A549 (cell line): ENCODE measurements at regions of chr16 and their contacts with region 1.

Region 1: DNA sequence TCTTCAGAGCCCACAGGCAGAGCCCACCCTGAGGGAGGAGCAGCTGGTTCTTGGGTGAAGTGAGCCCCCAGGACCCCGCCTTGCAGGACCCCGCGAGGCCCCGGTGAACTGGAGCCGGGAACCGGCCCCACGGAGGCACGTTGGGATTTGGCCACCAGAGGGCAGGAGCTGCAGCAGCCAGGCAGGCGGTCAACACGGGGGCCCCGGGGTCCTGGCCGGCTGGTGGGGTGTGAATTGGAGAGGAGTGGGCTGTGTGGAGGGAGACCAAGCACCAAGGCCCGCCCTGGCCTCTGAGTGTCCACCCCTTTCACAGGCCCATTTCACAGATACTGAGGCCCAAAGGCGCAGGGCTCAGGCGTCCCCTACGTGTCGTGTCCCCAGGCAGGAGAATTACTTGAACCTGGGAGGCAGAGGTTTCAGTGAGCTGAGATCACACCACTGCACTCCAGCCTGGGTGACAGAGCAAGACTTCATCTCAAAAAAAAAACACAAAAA is 2.2 kb downstream of the DPEP1 start:
- DNase-seq: peak in 1 of 2 experiments; percentile 47
- ATAC-seq: peak; percentile 54 to 83; a peak in 3 of 6 replicates
- H3K4me3 ChIP-seq: no peak overlapping the region
- H3K27ac ChIP-seq: peak overlapping the region in 1 of 2 experiments; percentile 52; a peak in 3 of 6 replicates
- H3K4me1 ChIP-seq: peaks cover 23% of the 10 kb centered on the region
- CTCF ChIP-seq: peak; percentile 77
- EP300 ChIP-seq: no peak
- POLR2A ChIP-seq: no peak
- RAD21 ChIP-seq: peak; percentile 49 to 67

Region 2: DNA sequence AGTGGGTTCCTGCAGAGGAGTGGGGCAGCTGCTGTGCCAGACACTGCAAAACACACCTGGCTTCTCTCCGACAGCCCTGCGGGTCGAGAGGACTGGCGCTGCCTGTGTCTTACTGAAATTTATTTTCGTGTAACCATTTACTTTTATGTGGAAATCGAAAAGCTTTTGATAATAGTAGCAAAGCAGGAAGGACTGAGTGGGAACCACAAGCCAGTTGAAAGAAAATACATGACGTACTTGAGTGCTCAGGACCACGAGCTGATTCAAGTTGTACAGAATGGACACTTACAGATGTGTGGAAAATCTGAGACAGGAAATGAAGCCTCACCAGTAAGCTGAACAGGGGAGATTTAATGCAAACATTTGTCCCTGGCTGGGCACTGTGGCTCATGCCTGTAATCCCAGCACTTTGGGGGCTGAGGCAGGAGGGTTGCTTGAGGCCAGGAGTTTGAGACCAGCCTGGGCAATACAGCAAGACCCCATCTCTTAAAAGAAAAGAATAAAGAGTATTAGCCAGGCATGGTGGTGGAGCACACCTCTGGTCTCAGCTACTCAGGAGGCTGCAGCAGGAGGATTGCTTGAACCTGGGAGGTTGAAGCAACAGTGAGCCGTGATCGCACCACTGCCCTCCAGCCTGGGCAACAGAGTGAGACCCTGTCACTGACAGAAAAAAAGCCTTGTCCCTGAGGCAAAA is 66.5 kb before region 1 on chr16:
- CTCF ChIA-PET with region 1: no interaction called
- POLR2A ChIA-PET with region 1: no interaction called
- DNase-seq: no peak
- ATAC-seq: no peak
- H3K4me3 ChIP-seq: no peak overlapping the region
- H3K27ac ChIP-seq: no peak overlapping the region
- H3K4me1 ChIP-seq: no peaks in the 10 kb centered on the region
- CTCF ChIP-seq: no peak
- EP300 ChIP-seq: no peak
- POLR2A ChIP-seq: no peak
- RAD21 ChIP-seq: no peak

Region 3: DNA sequence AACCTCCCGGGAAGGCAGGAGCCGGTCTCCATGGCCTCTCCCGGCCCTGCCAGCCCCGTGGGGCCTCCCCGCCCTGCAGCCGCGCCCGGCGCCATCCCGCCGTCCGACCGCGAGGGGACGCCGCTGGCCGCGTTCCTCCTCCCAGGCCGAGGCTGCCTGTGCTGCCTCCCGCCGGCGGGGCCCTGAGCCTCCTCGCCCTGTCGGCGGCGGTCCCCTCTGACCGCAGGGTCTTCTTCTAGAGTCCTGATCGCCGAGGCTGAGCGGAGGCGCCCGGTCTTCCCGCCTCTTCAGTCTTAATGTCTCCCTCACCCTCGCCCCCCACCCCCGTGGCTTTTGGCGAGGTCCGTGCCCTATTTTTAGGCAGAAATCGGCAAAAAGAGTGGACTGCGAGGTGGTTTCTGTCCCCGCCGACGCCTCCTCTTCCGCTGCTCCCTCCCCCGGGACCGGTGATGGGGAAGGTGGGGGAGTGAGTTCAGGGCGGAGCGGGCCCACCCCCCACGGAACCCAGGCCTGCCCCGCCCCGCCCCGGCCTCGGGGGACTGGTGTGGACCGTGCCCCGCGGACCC is 40.9 kb before region 1 on chr16:
- CTCF ChIA-PET with region 1: interaction called, 12 read pairs
- POLR2A ChIA-PET with region 1: no interaction called
- DNase-seq: peak; percentile 84 to 92
- ATAC-seq: peak; percentile 69 to 90
- H3K4me3 ChIP-seq: peak overlapping the region; percentile 73
- H3K27ac ChIP-seq: peak overlapping the region; percentile 90 to 97
- H3K4me1 ChIP-seq: peaks cover 15% of the 10 kb centered on the region
- CTCF ChIP-seq: peak; percentile 90
- EP300 ChIP-seq: no peak
- POLR2A ChIP-seq: no peak
- RAD21 ChIP-seq: peak; percentile 79 to 91

Region 4: GRCh38 chr16:89602273-89602951 is 13.2 kb before region 1 on chr16:
- CTCF ChIA-PET with region 1: interaction called, 49 read pairs
- POLR2A ChIA-PET with region 1: no interaction called
- DNase-seq: peak; percentile 55 to 56
- ATAC-seq: peak; percentile 65 to 71
- H3K4me3 ChIP-seq: no peak overlapping the region
- H3K27ac ChIP-seq: peak overlapping the region; percentile 23 to 76; a peak in 4 of 6 replicates
- H3K4me1 ChIP-seq: peaks cover 30% of the 10 kb centered on the region
- CTCF ChIP-seq: no peak
- EP300 ChIP-seq: no peak
- POLR2A ChIP-seq: no peak
- RAD21 ChIP-seq: no peak

Region 5: DNA sequence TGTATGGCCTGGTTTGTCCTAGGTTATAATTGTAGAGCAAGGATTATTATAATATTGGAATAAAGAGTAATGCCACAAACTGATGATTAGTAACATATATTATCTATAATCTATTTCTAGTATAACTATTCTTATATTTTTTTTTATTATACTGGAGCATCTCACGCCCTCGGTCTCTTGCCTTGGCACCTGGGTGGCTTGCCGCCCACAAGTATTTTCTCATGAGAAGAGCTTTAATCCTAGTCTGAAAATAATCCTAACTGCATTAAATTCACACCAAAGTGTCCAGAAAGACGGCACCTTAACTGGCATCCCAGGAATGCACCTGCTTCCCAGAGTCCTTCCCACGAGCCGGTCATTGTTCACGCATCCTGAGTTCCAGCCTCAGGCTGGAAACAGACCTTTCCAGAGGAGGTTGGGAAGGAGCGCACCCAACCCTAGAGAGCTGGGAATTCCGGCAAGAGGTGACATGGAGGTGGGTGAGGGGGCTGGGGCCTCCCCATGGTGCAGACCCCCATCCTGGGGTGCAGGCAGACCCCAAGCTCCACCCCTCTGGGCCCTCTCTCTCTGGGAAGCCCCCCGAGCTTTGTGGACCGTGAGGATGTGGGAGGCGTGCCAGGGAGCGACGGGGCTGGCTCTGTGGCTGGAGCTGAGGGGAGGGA is 25.9 kb after region 1 on chr16:
- CTCF ChIA-PET with region 1: interaction called, 125 read pairs
- POLR2A ChIA-PET with region 1: no interaction called
- DNase-seq: no peak
- ATAC-seq: no peak
- H3K4me3 ChIP-seq: no peak overlapping the region
- H3K27ac ChIP-seq: no peak overlapping the region
- H3K4me1 ChIP-seq: 0 out of 3 replicates have a peak, but pooled peaks cover 3% of the 10 kb centered on the region
- CTCF ChIP-seq: no peak; the same call in 2 of the 3 replicates
- EP300 ChIP-seq: no peak
- POLR2A ChIP-seq: no peak
- RAD21 ChIP-seq: no peak; a peak in 1 of 5 replicates

Region 6: GRCh38 chr16:89658221-89658879 is 42.7 kb after region 1 on chr16:
- CTCF ChIA-PET with region 1: interaction called, 35 read pairs
- POLR2A ChIA-PET with region 1: no interaction called
- DNase-seq: no peak
- ATAC-seq: peak; percentile 42 to 53; a peak in 5 of 6 replicates
- H3K4me3 ChIP-seq: peak overlapping the region; percentile 94
- H3K27ac ChIP-seq: peak overlapping the region; percentile 88 to 93
- H3K4me1 ChIP-seq: peaks cover 16% of the 10 kb centered on the region
- CTCF ChIP-seq: no peak
- EP300 ChIP-seq: no peak
- POLR2A ChIP-seq: no peak
- RAD21 ChIP-seq: no peak

Region 7: DNA sequence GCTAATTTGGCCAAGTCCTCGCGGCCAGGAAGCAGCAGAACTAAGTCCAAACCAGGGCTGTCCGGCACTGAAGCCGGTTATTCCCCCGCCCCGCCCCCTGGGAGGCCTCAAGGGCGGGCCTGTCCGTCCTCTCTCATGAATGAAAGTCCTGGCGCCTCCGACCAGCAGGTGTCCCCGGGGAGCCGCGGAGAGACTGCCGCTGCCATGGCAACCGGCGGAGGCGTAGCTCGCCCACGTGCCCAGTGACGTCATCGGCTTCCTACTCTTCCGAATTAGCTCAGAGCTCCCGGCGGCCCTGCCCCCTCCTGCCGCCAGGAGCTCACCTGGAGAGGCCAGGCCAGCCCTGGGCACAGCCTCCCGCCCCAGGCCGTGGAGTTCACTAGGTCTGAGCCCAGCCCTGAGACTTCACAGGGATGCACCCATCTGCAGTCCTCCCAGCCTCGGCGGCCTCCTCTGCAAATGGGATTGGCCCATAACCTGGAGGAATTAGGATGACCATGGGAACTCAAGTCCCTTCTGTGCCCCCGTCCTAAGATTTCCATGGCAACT is 84.5 kb after region 1 on chr16:
- CTCF ChIA-PET with region 1: interaction called, 14 read pairs
- POLR2A ChIA-PET with region 1: no interaction called
- DNase-seq: peak; percentile 93 to 99
- ATAC-seq: peak; percentile 49 to 76
- H3K4me3 ChIP-seq: peak overlapping the region; percentile 69
- H3K27ac ChIP-seq: peak overlapping the region; percentile 82 to 92
- H3K4me1 ChIP-seq: peaks cover 12% of the 10 kb centered on the region
- CTCF ChIP-seq: peak; percentile 69
- EP300 ChIP-seq: no peak
- POLR2A ChIP-seq: no peak
- RAD21 ChIP-seq: peak; percentile 63 to 71